Ovary (tissue), 10 donors: ENCODE measurements at regions of chr1 and their contacts with region 1.

Region 1: GRCh38 chr1:100606438-100606837 is 68.5 kb downstream of the GPR88 start:
- DNase-seq: peak; percentile 24 to 60 (median 44)
- H3K4me3 ChIP-seq: no peak overlapping the region
- H3K27ac ChIP-seq: no peak overlapping the region
- H3K4me1 ChIP-seq: peaks cover 3% of the 10 kb centered on the region
- H3K27me3 ChIP-seq: no peaks in the 10 kb centered on the region
- CTCF ChIP-seq: peak; percentile 28 to 54 (median 37)
- EP300 ChIP-seq: no peak
- POLR2A ChIP-seq: no peak

Region 2: GRCh38 chr1:100499194-100499811 is 107.1 kb before region 1 on chr1:
- intact Hi-C with region 1: loop called in 1 of 4 experiments (anchors 2 kb)
- DNase-seq: no peak
- H3K4me3 ChIP-seq: no peak overlapping the region
- H3K27ac ChIP-seq: no peak overlapping the region
- H3K4me1 ChIP-seq: no peaks in the 10 kb centered on the region
- H3K27me3 ChIP-seq: no peaks in the 10 kb centered on the region
- CTCF ChIP-seq: no peak
- EP300 ChIP-seq: no peak
- POLR2A ChIP-seq: no peak

Region 3: GRCh38 chr1:100734676-100735075 is 128.2 kb after region 1 on chr1:
- intact Hi-C with region 1: no loop called
- DNase-seq: no peak
- H3K4me3 ChIP-seq: no peak overlapping the region
- H3K27ac ChIP-seq: no peak overlapping the region
- H3K4me1 ChIP-seq: peaks cover 2% of the 10 kb centered on the region
- H3K27me3 ChIP-seq: no peaks in the 10 kb centered on the region
- CTCF ChIP-seq: no peak
- EP300 ChIP-seq: no peak
- POLR2A ChIP-seq: no peak

Region 4: DNA sequence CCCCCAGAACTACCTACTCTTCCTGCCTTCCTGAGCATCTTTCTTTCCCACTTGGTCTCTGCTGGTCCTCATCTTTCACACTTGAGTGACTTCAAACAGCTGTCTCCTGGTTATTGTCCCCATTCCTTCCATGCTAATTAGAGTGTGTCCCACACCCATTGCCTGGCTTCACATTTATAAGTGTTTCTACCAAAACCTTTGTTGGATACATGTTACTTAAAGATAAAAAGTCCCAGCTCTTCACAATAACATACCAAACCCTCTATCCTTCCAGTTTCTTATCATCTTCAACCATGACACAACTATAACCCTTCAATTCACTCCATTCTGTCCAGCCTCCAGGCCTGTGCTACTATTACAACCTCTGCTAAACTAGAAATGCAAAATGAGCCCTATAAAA is 154.1 kb after region 1 on chr1:
- intact Hi-C with region 1: no loop called
- DNase-seq: no peak
- H3K4me3 ChIP-seq: no peak overlapping the region
- H3K27ac ChIP-seq: no peak overlapping the region
- H3K4me1 ChIP-seq: no peaks in the 10 kb centered on the region
- H3K27me3 ChIP-seq: no peaks in the 10 kb centered on the region
- CTCF ChIP-seq: no peak
- EP300 ChIP-seq: no peak
- POLR2A ChIP-seq: no peak

Region 5: GRCh38 chr1:100866041-100866900 is 259.8 kb after region 1 on chr1:
- intact Hi-C with region 1: loop called in 3 of 4 experiments (anchors 2 to 10 kb)
- DNase-seq: no peak
- H3K4me3 ChIP-seq: no peak overlapping the region
- H3K27ac ChIP-seq: no peak overlapping the region
- H3K4me1 ChIP-seq: no peaks in the 10 kb centered on the region
- H3K27me3 ChIP-seq: no peaks in the 10 kb centered on the region
- CTCF ChIP-seq: peak in 2 of 3 donors; percentile 62 to 63
- EP300 ChIP-seq: no peak
- POLR2A ChIP-seq: no peak